Heart right ventricle (tissue), 16 donors: ENCODE measurements at regions of chr2 and their contacts with region 1.

Region 1: GRCh38 chr2:202790676-202791075 is 80.9 kb downstream of the ICA1L start:
- DNase-seq: no peak
- ATAC-seq: no peak
- H3K4me3 ChIP-seq: no peak overlapping the region
- H3K27ac ChIP-seq: no peak overlapping the region
- H3K4me1 ChIP-seq: no peaks in the 10 kb centered on the region
- H3K27me3 ChIP-seq: no peaks in the 10 kb centered on the region
- CTCF ChIP-seq: no peak

Region 2: DNA sequence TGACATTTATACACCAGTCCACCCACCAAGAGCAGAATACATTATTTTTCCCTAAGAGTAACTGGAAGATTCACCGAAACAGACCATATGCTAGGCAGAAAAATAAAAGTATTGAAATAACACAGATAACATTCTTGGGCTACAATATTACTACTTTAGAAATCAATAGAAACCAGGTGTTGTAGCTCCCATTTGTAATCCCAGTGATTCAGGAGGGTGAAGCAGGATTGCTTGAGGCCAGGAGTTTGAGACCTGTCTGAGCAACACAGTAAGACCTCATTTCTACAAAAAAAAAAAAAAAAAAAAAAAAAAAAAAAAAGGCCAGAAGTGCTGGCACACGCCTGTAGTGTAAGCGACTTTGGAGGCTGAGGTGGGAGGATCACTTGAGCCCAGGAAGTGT is 71.3 kb after region 1 on chr2:
- intact Hi-C with region 1: loop called in 1 of 10 experiments (anchors 10 kb)
- DNase-seq: no peak
- ATAC-seq: no peak
- H3K4me3 ChIP-seq: no peak overlapping the region
- H3K27ac ChIP-seq: no peak overlapping the region
- H3K4me1 ChIP-seq: no peaks in the 10 kb centered on the region
- H3K27me3 ChIP-seq: no peaks in the 10 kb centered on the region
- CTCF ChIP-seq: no peak

Region 3: DNA sequence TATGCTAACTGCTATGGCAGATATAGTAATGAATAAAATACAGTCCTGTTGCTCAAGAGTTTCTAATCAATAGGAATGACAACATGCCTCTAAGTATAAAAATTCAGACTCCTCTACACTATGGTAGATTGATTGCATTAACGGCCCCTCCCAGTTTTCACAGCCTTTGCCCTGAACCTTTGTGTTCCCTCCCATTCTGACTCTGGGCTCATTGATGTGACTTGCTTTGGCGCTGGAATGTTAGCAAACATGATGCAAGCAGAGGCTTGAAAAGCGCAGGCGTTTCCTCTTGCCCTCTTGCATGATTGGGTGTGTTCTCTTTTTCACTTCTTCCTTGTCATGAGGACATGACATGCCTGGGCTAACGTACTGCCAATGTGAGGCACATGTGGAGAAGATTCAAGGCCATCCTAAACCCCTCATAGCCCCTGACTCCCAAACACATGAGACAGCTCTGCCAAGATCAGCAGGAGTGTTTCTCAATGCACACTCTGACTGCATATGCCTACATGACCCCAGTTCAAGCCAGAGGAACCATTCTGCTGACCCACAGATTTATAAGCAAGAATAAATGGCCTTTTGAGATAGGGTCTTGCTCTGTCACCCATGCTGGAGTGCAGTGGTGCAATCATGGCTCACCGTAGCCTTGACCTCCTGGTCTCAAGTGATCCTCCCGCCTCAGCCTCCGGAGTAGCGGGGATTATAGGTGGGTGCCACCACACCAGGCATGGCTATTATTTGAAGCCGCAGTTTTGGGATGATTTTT is 866.0 kb after region 1 on chr2:
- intact Hi-C with region 1: no loop called
- DNase-seq: peak in 1 of 2 donors; percentile 32
- ATAC-seq: peak; percentile 53 to 87 (median 72)
- H3K4me3 ChIP-seq: no peak overlapping the region
- H3K27ac ChIP-seq: peak overlapping the region in 6 of 10 donors; percentile 15 to 70 (median 34)
- H3K4me1 ChIP-seq: peaks cover 0 to 43% (median under 1%) of the 10 kb centered on the region in 9 donors
- H3K27me3 ChIP-seq: no peaks in the 10 kb centered on the region
- CTCF ChIP-seq: no peak